ENCODE measurements at regions of chr15 and their contacts with region 1.

Region 1: GRCh38 chr15:31236184-31237042 is 90.2 kb upstream of the KLF13 start:
- DNase-seq: no peak
- ATAC-seq: no peak
- H3K4me3 ChIP-seq: no peak overlapping the region
- H3K4me3 Mint-ChIP-seq: no peak overlapping the region
- H3K27ac ChIP-seq: no peak overlapping the region
- H3K27ac Mint-ChIP-seq: no peak overlapping the region
- H3K4me1 ChIP-seq: peaks cover 23 to 53% of the 10 kb centered on the region in 2 donors
- H3K4me1 Mint-ChIP-seq: peaks cover 66% of the 10 kb centered on the region
- H3K27me3 ChIP-seq: no peaks in the 10 kb centered on the region
- H3K27me3 Mint-ChIP-seq: no peaks in the 10 kb centered on the region
- CTCF ChIP-seq: no peak

Region 2: DNA sequence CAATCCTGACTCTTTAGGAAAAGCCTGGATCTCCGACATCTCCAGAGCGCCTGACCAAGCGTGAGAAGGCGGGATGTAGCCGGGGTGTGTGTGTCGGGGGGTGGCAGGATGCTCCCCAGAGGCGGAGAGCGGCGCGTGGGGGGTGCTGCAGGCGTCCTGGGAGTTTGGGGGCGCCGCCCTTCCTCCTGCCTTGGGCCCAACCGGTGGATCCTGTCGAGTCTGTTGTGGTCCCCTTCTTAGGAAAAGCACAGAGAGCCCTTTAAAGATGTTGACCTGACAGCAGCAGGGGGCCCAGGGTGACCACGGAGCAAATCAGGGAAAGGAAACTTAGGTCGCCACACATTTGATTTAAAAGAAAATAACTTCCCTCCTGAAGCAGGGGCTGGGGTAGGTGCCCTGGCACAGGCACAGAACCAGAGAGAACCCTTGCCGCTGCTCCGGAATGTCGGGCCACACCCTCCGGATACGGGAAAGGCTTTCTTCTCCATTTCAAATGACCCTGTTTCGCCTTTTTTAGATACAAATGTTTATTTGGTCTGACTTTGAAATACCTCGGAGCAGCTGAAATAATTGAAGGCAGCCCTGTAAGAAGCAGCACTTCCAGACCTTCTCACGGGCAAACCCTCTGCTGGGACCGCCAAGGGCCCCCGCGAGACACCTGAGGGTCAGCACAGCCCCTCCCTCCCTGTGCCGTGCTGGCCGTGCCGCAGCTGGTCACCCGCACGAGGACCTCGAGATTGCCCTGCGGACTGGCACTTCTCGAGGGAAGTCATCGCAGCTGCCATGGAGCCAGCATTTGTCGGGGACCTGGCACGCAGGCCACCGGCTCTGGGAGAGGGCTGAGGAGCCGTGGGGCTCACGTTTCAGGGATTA is 12.7 kb before region 1 on chr15:
- CTCF ChIA-PET with region 1: no interaction called
- POLR2A ChIA-PET with region 1: interaction called, 8 read pairs
- intact Hi-C with region 1: loop called (anchors 1 kb)
- DNase-seq: no peak
- ATAC-seq: no peak
- H3K4me3 ChIP-seq: peak overlapping the region in 3 of 5 experiments; percentile 5 to 21 (median 15)
- H3K4me3 Mint-ChIP-seq: peak overlapping the region; percentile 34
- H3K27ac ChIP-seq: peak overlapping the region in 1 of 2 donors; percentile 42
- H3K27ac Mint-ChIP-seq: peak overlapping the region; percentile 28
- H3K4me1 ChIP-seq: peaks cover 58 to 64% of the 10 kb centered on the region in 2 donors
- H3K4me1 Mint-ChIP-seq: peaks cover 60% of the 10 kb centered on the region
- H3K27me3 ChIP-seq: no peaks in the 10 kb centered on the region
- H3K27me3 Mint-ChIP-seq: no peaks in the 10 kb centered on the region
- CTCF ChIP-seq: no peak

Measured in B cell (primary cell).